Activated naive CD4-positive, alpha-beta T cell treated with anti-CD3 and anti-CD28 coated beads for 36 hours (primary cell): ENCODE measurements at regions of chr5 and their contacts with region 1.

Region 1: DNA sequence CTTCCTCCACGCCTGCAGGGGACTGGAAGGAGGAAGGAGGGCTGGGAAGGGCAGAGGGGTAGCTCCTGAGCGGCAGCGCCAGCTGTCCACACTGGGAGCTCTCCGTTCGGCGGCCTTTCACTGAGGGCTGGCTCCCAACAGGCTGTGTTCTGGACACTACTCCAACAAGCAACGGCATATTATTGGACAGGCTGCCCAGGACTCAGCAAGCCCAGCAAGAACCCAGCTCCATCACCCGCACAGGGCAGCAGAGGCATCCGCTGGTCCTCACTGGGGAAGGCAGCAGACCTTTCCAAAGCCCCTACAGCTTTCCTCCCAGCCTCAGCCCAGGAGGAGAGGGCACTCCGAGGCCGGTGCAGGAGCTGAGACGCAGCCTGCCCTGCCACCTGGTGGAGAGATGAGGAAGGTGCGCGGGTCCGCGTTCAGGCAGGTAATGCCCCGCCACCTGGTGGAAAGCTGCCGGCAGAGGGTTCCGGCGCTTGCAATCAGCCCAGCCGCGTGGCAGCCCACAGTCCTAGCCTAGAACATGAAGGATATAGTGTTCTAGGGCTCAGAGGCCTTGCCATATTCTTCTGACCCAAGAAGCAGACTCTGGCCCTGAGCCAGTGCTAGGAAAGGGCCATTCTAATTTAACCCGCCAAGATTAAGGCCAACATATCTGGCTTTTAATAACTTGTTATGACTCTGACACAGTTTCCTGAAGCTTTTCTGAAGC is 74.4 kb downstream of the NRG2 start:
- DNase-seq: peak; percentile 95
- H3K4me3 Mint-ChIP-seq: no peak overlapping the region
- H3K27ac Mint-ChIP-seq: no peak overlapping the region
- H3K4me1 Mint-ChIP-seq: no peaks in the 10 kb centered on the region
- H3K27me3 Mint-ChIP-seq: peaks cover 12% of the 10 kb centered on the region

Region 2: GRCh38 chr5:139795074-139796001 is 173.4 kb before region 1 on chr5 and contains the start of gene PSD2:
- CTCF ChIA-PET with region 1: interaction called, 25 read pairs
- intact Hi-C with region 1: no loop called
- DNase-seq: peak; percentile 30
- H3K4me3 Mint-ChIP-seq: peak within 1 kb of the TSS; percentile 49
- H3K27ac Mint-ChIP-seq: no peak within 1 kb of the TSS
- H3K4me1 Mint-ChIP-seq: peaks cover 2% of the 10 kb centered on the region
- H3K27me3 Mint-ChIP-seq: peaks cover 47% of the 10 kb centered on the region
- total RNA-seq, gene PSD2: not detected

Region 3: DNA sequence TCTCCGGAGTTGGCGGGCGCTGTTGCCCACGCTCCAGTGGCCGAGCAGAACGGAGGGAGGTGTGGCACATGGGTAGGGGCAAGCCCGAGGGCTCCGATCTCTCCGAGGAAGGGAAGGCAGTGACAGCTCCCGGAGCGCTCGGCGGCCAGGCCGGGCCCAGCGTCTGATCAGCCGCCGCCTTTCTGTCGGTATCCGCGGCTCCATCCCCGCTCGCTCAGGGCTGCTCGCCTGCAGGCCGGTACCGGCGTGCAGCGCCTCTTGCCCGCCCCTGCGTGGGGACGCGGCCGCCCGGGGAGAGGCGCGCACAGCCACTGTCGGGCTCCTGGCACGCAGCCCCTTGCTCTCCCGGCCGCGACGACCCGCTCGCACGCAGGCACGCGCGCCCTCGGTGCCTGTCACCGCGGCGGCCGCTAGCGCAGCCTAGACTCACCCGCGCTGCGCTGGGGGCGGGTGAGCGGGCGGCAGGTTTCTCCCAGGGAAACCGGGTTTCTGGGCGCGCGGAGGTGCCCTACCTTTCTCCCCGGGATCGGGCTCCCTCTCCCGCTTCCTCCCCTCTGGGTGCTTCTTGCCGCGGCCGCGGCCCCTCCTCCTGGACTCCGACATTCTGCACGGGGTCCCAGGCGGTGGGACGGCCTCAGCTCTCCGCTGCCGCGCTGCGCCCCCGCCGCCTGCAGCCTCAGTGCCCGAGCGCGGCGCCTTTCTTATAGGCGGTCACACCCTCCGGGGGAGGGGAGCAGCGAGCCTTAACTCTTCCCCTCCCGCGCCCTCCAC is 64.7 kb before region 1 on chr5:
- CTCF ChIA-PET with region 1: interaction called, 9 read pairs
- intact Hi-C with region 1: loop called (anchors 2 kb)
- DNase-seq: peak; percentile 13
- H3K4me3 Mint-ChIP-seq: no peak overlapping the region
- H3K27ac Mint-ChIP-seq: no peak overlapping the region
- H3K4me1 Mint-ChIP-seq: peaks cover 3% of the 10 kb centered on the region
- H3K27me3 Mint-ChIP-seq: peaks cover 27% of the 10 kb centered on the region

Region 4: DNA sequence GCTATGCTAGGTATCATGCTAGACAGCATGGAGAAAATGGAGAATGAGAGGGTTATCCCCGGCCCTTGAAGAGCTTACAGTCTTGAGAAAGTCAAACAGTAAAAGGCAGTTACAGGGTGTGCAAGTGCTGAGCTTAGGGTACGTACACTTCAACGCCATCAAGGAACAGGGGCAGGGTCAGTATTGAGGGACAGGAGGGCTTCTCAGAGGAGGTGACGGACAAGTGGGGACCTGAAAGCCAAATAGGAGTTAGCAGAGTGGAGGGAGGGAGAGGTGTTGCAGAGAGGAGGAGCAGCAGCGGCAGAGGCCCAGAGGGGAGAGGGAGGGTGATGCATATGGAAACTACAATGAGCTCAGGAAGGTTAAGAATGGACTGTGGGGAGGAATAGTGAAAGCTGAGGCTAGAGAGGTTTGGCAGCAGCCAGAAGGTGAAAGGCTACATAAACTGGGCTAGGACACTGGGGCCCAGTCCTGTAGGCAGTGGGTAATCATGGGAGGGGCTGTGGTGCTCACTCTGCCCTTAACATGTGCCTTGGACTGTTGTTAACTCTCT is 13.6 kb before region 1 on chr5:
- CTCF ChIA-PET with region 1: interaction called, 36 read pairs
- intact Hi-C with region 1: no loop called
- DNase-seq: no peak
- H3K4me3 Mint-ChIP-seq: no peak overlapping the region
- H3K27ac Mint-ChIP-seq: no peak overlapping the region
- H3K4me1 Mint-ChIP-seq: no peaks in the 10 kb centered on the region
- H3K27me3 Mint-ChIP-seq: peaks cover 10% of the 10 kb centered on the region

Region 5: DNA sequence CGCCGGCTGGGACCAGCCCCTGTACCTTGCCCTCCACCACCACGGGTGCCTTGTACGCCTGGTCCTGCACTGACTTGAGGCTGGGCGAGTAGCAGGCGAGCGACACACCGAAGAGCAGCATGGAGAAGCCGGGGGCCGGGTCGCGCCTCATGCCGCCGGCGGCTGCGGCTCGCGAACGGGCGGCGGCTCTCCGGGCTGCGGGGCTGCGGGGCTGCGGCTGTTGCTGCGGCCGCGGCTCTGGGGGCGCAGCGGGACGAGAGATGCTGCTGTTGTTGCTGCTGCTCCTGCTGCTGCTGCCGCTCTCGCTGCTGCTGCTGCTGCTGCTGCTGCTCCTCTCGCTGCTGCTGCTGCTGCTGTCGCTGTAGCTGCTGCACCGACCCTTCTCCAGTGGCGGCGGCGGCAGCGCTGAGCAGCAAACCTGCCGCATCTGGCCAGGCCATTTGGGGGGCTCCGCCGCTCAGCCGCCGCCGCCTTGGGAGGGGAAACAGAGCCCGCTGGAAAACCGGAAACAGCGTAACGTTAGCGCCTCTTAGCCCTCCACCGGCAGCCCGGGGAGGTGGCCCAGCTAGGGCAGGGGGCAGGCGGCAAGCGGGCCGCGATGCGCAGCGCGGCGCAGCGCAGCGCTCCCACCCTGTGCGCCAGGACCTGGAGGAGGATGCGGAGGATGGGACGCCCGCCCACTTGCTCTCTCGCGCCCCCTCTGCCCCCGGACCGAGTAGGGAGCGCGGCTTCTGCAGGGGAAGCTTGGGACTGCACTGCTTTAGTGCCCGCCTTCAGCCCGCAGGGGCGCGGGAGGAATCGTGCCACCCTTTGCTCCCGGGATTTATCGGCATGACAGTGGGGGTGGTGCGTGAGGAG is 74.2 kb after region 1 on chr5 and contains the start of gene NRG2:
- CTCF ChIA-PET with region 1: interaction called, 11 read pairs
- intact Hi-C with region 1: no loop called
- DNase-seq: peak; percentile 58
- H3K4me3 Mint-ChIP-seq: peak within 1 kb of the TSS; percentile 70
- H3K27ac Mint-ChIP-seq: no peak within 1 kb of the TSS
- H3K4me1 Mint-ChIP-seq: peaks cover 11% of the 10 kb centered on the region
- H3K27me3 Mint-ChIP-seq: peaks cover 47% of the 10 kb centered on the region
- total RNA-seq, gene NRG2: not detected